ENCODE measurements at regions of chr6 and their contacts with region 1.

Region 1: DNA sequence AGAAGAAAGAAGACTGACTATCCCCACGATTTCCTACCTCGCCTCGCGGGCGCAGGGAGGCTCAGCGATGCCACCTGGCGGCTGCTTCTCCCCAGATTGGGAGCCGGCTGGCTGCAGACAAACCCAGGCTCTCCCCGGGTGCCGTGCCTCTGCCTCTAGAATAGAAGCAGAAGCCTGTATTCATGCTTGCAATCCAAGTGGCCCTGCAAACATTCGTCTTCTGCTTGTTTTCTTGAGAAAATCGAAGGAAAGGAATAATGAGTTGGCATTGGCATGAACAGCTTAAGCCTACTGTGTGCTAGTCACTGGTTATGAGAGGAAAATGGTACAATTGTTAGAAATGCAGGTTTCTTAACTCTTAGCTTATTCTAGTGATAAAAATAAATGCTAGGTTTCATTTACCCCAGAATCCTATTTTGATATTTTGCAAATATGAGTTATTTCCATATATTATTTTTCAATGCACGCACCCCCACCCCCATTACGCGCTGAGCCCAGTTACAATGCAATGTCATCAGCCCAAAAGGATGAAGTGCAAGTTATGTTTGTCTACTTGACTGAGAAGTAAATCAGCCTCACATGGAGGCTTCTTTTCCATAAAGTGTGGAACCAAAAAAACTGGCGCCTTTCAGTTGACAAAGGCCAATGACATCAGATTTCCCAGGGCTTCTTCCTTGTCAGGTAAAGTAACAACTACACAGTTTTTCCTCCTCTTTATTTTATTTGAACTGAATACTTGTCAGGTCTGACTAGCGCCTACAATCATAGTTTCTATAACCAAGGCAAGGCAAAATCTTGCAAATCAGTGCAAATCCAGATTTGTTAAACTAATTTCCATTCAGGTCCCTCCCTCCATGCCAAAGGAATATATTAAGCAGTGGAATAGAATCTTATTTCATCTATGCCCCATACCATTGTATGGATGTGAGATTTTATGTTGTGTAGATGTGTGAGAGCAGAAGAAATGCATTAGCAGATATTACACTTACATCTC is 3.9 kb upstream of the SOX4 start:
- DNase-seq: no peak
- H3K4me3 ChIP-seq: peak overlapping the region; percentile 68
- H3K27me3 ChIP-seq: no peaks in the 10 kb centered on the region
- CTCF ChIP-seq: peak; percentile 97

Region 2: GRCh38 chr6:20564269-20564668 is 1025.4 kb before region 1 on chr6:
- CTCF ChIA-PET with region 1: interaction called, 53 read pairs
- POLR2A ChIA-PET with region 1: interaction called, 20 read pairs
- DNase-seq: no peak
- H3K4me3 ChIP-seq: no peak overlapping the region
- H3K27me3 ChIP-seq: no peaks in the 10 kb centered on the region
- CTCF ChIP-seq: peak; percentile 41

Region 3: DNA sequence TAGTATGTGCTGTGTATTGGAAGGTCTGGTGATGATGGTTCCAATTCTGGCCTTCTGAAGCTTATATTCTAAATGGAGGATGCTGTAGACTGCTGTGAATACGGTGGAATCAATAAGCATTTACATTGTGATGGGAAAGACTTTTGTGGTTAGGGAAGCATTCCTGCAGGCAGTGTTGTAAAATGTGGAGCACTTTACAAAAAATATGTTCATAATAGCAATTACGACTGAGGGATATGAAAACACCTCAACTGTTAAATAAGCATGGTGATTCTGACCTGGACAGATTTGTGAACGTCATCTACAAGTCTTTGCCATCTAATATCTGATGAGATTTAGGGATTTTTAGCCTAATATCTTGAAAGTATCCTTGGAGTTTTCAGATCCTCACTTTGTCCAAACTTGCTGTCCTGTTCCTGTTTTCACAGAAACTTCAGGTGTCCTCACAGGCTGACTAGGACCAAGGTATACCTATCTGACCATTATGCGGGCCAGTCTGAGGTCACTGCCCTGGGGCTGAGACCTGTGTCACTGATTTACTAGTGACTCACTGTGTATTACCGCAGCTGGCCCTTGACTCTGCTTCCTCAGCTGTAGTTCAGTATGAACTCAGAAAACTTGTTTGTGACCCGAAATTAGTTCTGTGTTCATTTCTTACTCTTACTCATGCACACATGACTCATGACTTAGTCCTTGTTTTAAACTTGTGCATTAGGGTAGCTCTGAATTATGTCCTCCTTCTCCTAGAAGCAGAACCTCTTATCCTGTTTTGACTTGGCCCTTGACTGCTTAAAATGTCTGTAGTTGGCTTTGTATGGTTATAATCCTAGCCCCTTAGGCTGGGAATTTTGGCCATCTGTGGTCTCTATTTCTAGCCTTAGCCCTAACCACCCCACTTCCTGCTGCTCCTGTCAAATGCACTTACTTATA is 712.4 kb before region 1 on chr6:
- CTCF ChIA-PET with region 1: interaction called, 17 read pairs
- POLR2A ChIA-PET with region 1: no interaction called
- DNase-seq: peak; percentile 80
- H3K4me3 ChIP-seq: no peak overlapping the region
- H3K27me3 ChIP-seq: no peaks in the 10 kb centered on the region
- CTCF ChIP-seq: no peak

Region 4: GRCh38 chr6:21653905-21654304 is 64.3 kb after region 1 on chr6:
- CTCF ChIA-PET with region 1: no interaction called
- POLR2A ChIA-PET with region 1: no interaction called
- DNase-seq: no peak
- H3K4me3 ChIP-seq: no peak overlapping the region
- H3K27me3 ChIP-seq: no peaks in the 10 kb centered on the region
- CTCF ChIP-seq: no peak

Region 5: DNA sequence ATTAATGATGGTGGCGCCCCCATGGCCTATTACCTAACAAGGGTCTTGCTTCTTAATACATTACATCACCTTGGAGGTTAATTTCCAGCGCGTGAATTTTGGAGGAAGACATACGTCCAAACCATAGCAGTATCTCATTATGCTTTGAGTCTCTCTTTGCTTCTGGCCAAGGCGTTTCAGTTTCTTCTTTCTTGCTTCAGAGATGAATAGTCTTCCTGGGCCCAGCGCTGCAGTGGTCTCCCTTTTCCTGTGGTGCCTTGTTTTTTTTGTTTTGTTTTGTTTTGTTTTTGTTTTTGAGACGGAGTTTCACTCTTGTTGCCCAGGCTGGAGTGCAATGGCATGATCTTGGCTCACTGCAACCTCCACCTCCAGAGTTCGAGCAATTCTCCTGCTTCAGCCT is 272.3 kb after region 1 on chr6:
- CTCF ChIA-PET with region 1: no interaction called
- POLR2A ChIA-PET with region 1: interaction called, 15 read pairs
- DNase-seq: no peak
- H3K4me3 ChIP-seq: no peak overlapping the region
- H3K27me3 ChIP-seq: no peaks in the 10 kb centered on the region
- CTCF ChIP-seq: no peak

Region 6: DNA sequence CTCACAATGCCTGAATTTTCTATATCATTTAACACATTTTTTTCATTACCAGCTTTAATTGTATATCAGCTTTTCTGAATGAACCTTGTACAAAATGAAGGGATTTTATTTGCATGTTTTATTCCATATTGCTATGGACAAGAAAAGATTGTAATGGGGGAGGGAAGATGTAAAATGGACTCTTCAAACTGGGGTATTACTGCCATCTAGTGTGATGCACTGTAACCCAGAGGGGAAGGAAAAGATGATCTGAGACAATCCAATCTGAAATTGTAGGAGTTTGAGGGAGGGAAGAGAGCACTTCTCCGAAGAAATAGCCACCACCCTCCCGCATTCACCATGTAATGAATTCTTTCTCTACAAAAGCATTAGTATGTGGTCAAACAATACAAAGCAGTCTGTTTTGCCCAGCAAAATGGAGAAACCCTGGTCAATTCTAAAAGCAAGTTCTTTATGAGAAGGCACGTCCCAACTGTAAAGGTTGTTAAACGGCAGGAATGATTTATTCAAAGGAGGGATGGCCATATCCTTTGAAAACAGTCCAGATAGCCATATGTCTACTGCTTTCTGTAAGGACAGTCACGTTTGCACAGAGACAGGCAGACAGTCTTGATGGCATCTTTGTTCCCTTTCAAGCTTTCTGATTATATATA is 1856.9 kb after region 1 on chr6:
- CTCF ChIA-PET with region 1: interaction called, 13 read pairs
- POLR2A ChIA-PET with region 1: no interaction called
- DNase-seq: peak; percentile 8
- H3K4me3 ChIP-seq: no peak overlapping the region
- H3K27me3 ChIP-seq: no peaks in the 10 kb centered on the region
- CTCF ChIP-seq: peak; percentile 66

Measured in BJ (cell line).